ENCODE measurements at regions of chr3 and their contacts with region 1.

Region 1: DNA sequence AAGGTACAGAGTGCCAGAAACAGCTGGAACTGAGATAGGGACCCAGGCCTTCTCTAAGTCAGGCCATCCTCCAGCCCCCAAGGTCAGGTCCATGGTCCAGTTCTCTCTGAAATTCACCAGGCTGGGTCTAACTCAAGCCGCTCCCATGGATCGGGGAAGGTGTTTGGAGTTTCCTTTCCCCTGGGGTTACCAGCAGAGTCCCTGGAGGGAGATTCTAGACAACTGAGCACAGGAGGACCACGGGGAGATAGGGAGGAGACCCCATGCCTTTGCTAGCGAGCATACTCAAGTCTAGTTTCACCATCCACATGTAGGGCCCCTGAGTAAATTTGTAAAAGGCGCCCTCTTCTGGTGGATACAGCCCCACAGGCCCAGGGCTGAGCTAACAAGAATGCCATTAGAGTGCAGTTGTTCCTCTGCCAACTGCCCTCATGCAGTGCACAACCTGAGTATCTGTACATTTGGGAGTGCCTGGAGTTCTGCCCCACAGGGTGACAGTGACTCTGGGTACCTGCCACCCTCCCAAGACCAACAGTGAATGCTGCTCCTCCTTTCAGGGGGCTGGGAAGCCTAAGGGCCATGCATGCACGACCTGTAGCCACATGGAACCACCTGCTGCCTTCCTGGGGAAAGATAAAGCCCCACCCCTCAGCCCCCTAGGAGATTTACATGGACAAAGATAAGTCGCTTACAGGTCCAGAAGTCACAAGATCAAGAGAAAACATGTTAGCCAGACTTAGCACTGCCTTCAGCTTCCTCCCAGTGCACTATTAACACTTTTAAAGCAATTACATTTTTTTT is 89.0 kb downstream of the IQSEC1 start:
- H3K4me3 ChIP-seq: no peak overlapping the region
- H3K27ac ChIP-seq: no peak overlapping the region
- H3K4me1 ChIP-seq: no peaks in the 10 kb centered on the region
- CTCF ChIP-seq: 0 out of 2 replicates have a peak, but pooled peaks have one; percentile 61

Region 2: GRCh38 chr3:12963922-12964701 is 20.1 kb before region 1 on chr3:
- CTCF ChIA-PET with region 1: interaction called, 17 read pairs
- POLR2A ChIA-PET with region 1: interaction called, 6 read pairs
- H3K4me3 ChIP-seq: no peak overlapping the region
- H3K27ac ChIP-seq: no peak overlapping the region
- H3K4me1 ChIP-seq: peaks cover 7% of the 10 kb centered on the region
- CTCF ChIP-seq: no peak

Region 3: DNA sequence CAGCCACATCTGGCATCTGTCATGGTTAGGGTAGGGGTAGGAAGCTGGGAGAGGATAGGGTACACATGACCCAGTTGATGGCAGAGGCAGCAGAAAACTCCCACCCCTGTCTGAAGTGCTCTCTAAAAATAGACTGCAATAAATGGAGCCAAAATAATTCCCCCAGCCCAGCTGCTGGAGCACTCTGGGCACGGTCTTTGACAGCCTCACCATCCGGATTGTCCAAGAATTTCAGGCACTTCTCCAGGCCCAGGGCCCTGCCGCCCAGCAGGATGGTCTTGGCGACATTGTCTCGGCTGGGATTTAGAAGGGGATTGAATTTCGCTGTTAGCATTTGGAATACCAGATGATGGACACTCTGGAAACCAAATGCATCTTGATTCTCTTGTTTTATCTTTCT is 14.7 kb before region 1 on chr3:
- CTCF ChIA-PET with region 1: interaction called, 17 read pairs
- POLR2A ChIA-PET with region 1: interaction called, 6 read pairs
- H3K4me3 ChIP-seq: no peak overlapping the region
- H3K27ac ChIP-seq: no peak overlapping the region
- H3K4me1 ChIP-seq: peaks cover 3% of the 10 kb centered on the region
- CTCF ChIP-seq: no peak

Region 4: GRCh38 chr3:12994607-12995388 is 10.6 kb after region 1 on chr3:
- CTCF ChIA-PET with region 1: interaction called, 32 read pairs
- POLR2A ChIA-PET with region 1: no interaction called
- H3K4me3 ChIP-seq: peak overlapping the region; percentile 54
- H3K27ac ChIP-seq: no peak overlapping the region; the same call in 1 of the 2 replicates
- H3K4me1 ChIP-seq: no peaks in the 10 kb centered on the region
- CTCF ChIP-seq: peak; percentile 98

Region 5: DNA sequence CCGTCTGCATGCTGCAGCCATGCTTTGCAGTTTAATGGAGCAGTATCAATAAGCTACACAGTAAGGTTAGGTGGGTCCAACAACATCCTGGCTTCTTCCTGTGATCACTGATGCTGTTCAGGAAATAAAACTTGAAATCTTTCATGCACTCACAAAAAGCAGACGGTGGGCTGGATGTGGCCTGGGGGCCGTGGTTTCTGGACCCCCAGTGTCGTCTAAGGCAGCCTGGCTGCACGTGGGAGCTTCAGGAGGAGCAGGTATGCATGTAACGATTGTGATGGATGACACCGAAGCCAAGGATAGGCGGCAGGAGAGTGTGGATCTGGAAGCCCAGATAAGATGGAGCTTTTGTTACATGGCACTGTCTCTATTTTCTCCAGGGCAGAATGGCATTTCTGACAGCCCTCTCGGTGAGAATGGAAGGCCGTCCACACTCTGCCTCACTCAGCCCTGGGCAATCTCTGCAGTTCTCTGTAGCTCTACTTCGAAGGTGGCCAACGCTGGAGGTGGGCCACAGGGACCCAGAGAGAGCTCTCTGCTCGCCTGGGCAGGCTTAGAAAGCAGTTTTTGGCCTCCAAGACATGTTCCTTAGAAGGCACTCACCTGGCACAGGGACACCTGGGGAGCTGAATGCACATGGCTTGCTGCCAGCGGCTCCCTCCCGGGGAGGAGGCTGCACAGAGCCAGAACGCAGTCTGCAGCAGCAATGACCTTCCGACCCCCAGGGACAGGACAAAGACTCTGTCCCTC is 135.4 kb after region 1 on chr3:
- CTCF ChIA-PET with region 1: no interaction called
- POLR2A ChIA-PET with region 1: no interaction called
- H3K4me3 ChIP-seq: no peak overlapping the region
- H3K27ac ChIP-seq: no peak overlapping the region
- H3K4me1 ChIP-seq: no peaks in the 10 kb centered on the region
- CTCF ChIP-seq: no peak

Region 6: GRCh38 chr3:13324835-13325501 is 340.7 kb after region 1 on chr3:
- CTCF ChIA-PET with region 1: no interaction called
- POLR2A ChIA-PET with region 1: no interaction called
- H3K4me3 ChIP-seq: no peak overlapping the region
- H3K27ac ChIP-seq: no peak overlapping the region
- H3K4me1 ChIP-seq: no peaks in the 10 kb centered on the region
- CTCF ChIP-seq: no peak